ENCODE measurements at regions of chr22 and their contacts with region 1.

Region 1: GRCh38 chr22:42533638-42533977 is 14.0 kb upstream of the RRP7A start:
- DNase-seq: peak in 1 of 5 donors; percentile 50
- H3K4me3 ChIP-seq: peak overlapping the region; percentile 56 to 70
- H3K4me3 Mint-ChIP-seq: peak overlapping the region; percentile 85 to 98 (median 90)
- H3K27ac ChIP-seq: peak overlapping the region; percentile 79
- H3K27ac Mint-ChIP-seq: peak overlapping the region; percentile 89 to 100 (median 96)
- H3K4me1 ChIP-seq: peaks cover 6% of the 10 kb centered on the region
- H3K4me1 Mint-ChIP-seq: peaks cover 5 to 17% (median 11%) of the 10 kb centered on the region in 4 donors
- H3K27me3 ChIP-seq: no peaks in the 10 kb centered on the region
- H3K27me3 Mint-ChIP-seq: no peaks in the 10 kb centered on the region

Region 2: GRCh38 chr22:42207918-42208317 is 325.7 kb before region 1 on chr22:
- CTCF ChIA-PET with region 1: no interaction called
- POLR2A ChIA-PET with region 1: no interaction called
- intact Hi-C with region 1: no loop called
- DNase-seq: no peak
- H3K4me3 ChIP-seq: no peak overlapping the region
- H3K4me3 Mint-ChIP-seq: peak overlapping the region; percentile 22 to 80 (median 62)
- H3K27ac ChIP-seq: peak overlapping the region; percentile 34
- H3K27ac Mint-ChIP-seq: peak overlapping the region; percentile 58 to 96 (median 82)
- H3K4me1 ChIP-seq: peaks cover 61% of the 10 kb centered on the region
- H3K4me1 Mint-ChIP-seq: peaks cover 47 to 82% (median 64%) of the 10 kb centered on the region in 4 donors
- H3K27me3 ChIP-seq: no peaks in the 10 kb centered on the region
- H3K27me3 Mint-ChIP-seq: no peaks in the 10 kb centered on the region

Region 3: GRCh38 chr22:42544686-42545085 is 11.1 kb after region 1 on chr22:
- CTCF ChIA-PET with region 1: interaction called, 12 read pairs
- POLR2A ChIA-PET with region 1: no interaction called
- intact Hi-C with region 1: no loop called
- DNase-seq: no peak
- H3K4me3 ChIP-seq: no peak overlapping the region
- H3K4me3 Mint-ChIP-seq: no peak overlapping the region
- H3K27ac ChIP-seq: no peak overlapping the region
- H3K27ac Mint-ChIP-seq: no peak overlapping the region
- H3K4me1 ChIP-seq: no peaks in the 10 kb centered on the region
- H3K4me1 Mint-ChIP-seq: peaks cover 0 to 4% (median 0%) of the 10 kb centered on the region in 4 donors
- H3K27me3 ChIP-seq: no peaks in the 10 kb centered on the region
- H3K27me3 Mint-ChIP-seq: no peaks in the 10 kb centered on the region

Region 4: GRCh38 chr22:42553475-42554361 is 20.1 kb after region 1 on chr22 and contains the start of gene SERHL2:
- CTCF ChIA-PET with region 1: interaction called, 10 read pairs
- POLR2A ChIA-PET with region 1: interaction called, 3 read pairs
- intact Hi-C with region 1: loop called (anchors 2 kb)
- DNase-seq: peak; percentile 74 to 88 (median 79)
- H3K4me3 ChIP-seq: peak within 1 kb of the TSS; percentile 61 to 66
- H3K4me3 Mint-ChIP-seq: peak within 1 kb of the TSS; percentile 78 to 90 (median 82)
- H3K27ac ChIP-seq: no peak within 1 kb of the TSS
- H3K27ac Mint-ChIP-seq: peak within 1 kb of the TSS in 5 of 7 donors; percentile 41 to 85 (median 80)
- H3K4me1 ChIP-seq: peaks cover 16% of the 10 kb centered on the region
- H3K4me1 Mint-ChIP-seq: peaks cover 9 to 29% (median 11%) of the 10 kb centered on the region in 4 donors
- H3K27me3 ChIP-seq: no peaks in the 10 kb centered on the region
- H3K27me3 Mint-ChIP-seq: no peaks in the 10 kb centered on the region
- total RNA-seq, gene SERHL2: 0.36 to 0.81 TPM

Region 5: DNA sequence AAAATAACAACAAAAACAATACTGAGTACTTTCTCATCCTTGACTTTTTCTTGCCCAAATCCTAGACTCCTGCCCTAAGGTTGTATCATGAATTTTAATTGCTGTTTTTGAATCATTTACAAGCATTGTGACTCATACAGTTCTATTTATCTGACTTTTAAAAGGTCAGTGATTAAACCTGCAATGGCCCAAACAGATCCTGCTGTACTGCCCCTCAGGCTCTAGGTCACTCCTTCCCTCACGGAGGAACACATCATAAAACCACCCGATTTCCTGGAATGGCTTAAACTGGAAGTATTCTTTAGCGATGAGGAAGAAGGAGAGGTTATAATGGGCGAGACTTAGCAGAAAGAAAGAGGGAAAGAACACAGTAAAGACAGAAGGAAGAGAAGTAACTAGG is 311.1 kb after region 1 on chr22:
- CTCF ChIA-PET with region 1: no interaction called
- POLR2A ChIA-PET with region 1: no interaction called
- intact Hi-C with region 1: no loop called
- DNase-seq: no peak
- H3K4me3 ChIP-seq: no peak overlapping the region
- H3K4me3 Mint-ChIP-seq: no peak overlapping the region
- H3K27ac ChIP-seq: no peak overlapping the region
- H3K27ac Mint-ChIP-seq: peak overlapping the region in 3 of 7 donors; percentile 4 to 60 (median 31)
- H3K4me1 ChIP-seq: peaks cover 4% of the 10 kb centered on the region
- H3K4me1 Mint-ChIP-seq: peaks cover 6 to 28% (median 21%) of the 10 kb centered on the region in 4 donors
- H3K27me3 ChIP-seq: no peaks in the 10 kb centered on the region
- H3K27me3 Mint-ChIP-seq: no peaks in the 10 kb centered on the region